Calu3 (cell line): ENCODE measurements at regions of chr14 and their contacts with region 1.

Region 1: GRCh38 chr14:66944872-66945271 is 244.4 kb upstream of the GARIN2 start:
- DNase-seq: peak; percentile 6
- H3K4me3 Mint-ChIP-seq: no peak overlapping the region
- H3K27ac Mint-ChIP-seq: no peak overlapping the region
- H3K4me1 Mint-ChIP-seq: no peaks in the 10 kb centered on the region
- H3K27me3 Mint-ChIP-seq: no peaks in the 10 kb centered on the region
- CTCF ChIP-seq: no peak

Region 2: GRCh38 chr14:67018720-67019119 is 73.8 kb after region 1 on chr14:
- CTCF ChIA-PET with region 1: no interaction called
- intact Hi-C with region 1: no loop called
- DNase-seq: no peak
- H3K4me3 Mint-ChIP-seq: no peak overlapping the region
- H3K27ac Mint-ChIP-seq: no peak overlapping the region
- H3K4me1 Mint-ChIP-seq: no peaks in the 10 kb centered on the region
- H3K27me3 Mint-ChIP-seq: no peaks in the 10 kb centered on the region
- CTCF ChIP-seq: no peak

Region 3: DNA sequence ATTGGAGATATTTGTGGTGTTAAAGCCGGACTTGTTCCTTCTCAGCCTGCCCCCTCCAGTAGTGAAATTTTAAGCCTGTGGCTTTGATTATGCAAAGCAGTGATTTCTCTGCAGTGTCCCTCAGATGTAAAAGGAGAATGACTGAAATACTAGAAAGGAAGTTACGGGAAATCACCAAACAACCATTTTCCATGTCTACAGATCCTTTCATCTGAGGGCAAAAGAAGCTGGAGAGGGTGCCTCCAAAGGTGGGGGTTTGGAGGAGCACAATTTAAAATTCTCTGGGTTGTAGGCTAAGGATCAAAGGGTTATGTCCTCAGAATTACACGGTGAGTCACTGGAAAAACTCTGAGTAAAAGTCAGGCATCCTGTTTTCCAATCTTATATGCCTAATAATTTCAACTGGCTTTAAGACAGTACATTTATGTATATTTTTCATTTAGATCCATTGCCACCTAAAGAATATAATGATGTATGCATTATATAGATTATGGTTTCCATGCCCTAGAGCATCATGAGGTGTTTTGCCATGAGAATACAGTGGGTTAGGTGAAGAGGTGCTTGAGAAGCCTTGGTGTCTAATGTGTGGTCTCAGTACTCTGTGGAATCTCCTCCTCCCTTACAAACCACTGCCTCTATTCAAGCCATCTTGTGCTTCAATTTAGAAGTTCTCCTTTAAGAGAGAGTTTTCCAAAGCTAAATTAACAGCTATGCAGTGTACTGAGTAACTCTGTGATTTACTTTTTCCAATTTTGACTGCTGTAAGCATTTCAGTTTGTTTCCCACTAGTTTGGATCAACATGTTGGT is 1236.9 kb after region 1 on chr14:
- CTCF ChIA-PET with region 1: interaction called, 12 read pairs
- intact Hi-C with region 1: no loop called
- DNase-seq: no peak
- H3K4me3 Mint-ChIP-seq: no peak overlapping the region
- H3K27ac Mint-ChIP-seq: peak overlapping the region; percentile 81
- H3K4me1 Mint-ChIP-seq: peaks cover 52% of the 10 kb centered on the region
- H3K27me3 Mint-ChIP-seq: no peaks in the 10 kb centered on the region
- CTCF ChIP-seq: no peak